ENCODE measurements at regions of chr6 and their contacts with region 1.

Region 1: DNA sequence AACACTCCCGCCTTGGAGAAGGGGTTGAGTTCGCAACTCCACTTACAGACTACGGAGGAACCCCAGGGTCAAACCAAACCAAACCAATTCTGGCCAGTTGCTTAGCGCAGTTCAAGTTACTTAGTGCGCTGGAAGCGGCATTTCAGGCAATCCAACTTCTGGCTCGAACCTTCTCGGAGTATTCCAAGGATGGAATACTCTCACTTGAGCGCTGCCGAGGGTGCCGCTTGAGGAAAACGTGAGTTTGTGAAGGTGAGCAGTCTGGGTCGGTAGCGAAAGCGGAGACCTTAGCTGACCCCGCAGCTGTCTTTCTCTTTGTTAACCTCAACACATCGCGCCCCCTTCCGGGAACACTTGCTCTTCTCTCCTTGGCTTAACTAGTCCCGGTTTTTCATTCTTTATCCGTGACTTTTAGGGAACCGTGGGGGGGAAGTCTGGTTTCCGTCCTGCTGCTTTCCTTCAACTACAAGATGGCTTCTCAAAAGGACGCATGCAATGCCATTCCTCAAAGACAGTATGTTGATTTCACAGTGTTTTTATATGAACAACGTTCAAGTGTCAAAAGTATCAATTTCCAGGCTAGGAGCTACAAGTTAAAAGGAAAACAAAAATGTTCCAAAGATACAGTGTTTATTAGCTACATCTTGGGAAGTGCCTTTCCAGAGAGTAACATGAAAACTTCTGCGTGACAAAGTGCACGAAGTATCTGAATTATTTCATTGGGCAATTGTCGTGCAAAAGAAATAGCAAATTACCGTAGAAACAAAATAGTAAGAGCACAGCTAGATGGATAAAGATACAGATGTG is 742 bp upstream of the PNISR start:
- DNase-seq: peak; percentile 76
- H3K4me3 Mint-ChIP-seq: peak overlapping the region; percentile 82
- H3K27ac Mint-ChIP-seq: peak overlapping the region; percentile 98
- H3K4me1 Mint-ChIP-seq: peaks cover 56% of the 10 kb centered on the region
- H3K27me3 Mint-ChIP-seq: no peaks in the 10 kb centered on the region

Region 2: GRCh38 chr6:98947351-98948292 is 478.2 kb before region 1 on chr6 and contains the start of gene FBXL4:
- CTCF ChIA-PET with region 1: no interaction called
- POLR2A ChIA-PET with region 1: no interaction called
- intact Hi-C with region 1: loop called (anchors 5 kb)
- DNase-seq: peak; percentile 88
- H3K4me3 Mint-ChIP-seq: peak within 1 kb of the TSS; percentile 93
- H3K27ac Mint-ChIP-seq: peak within 1 kb of the TSS; percentile 93
- H3K4me1 Mint-ChIP-seq: peaks cover 28% of the 10 kb centered on the region
- H3K27me3 Mint-ChIP-seq: no peaks in the 10 kb centered on the region
- total RNA-seq, gene FBXL4: 13.8 TPM

Region 3: DNA sequence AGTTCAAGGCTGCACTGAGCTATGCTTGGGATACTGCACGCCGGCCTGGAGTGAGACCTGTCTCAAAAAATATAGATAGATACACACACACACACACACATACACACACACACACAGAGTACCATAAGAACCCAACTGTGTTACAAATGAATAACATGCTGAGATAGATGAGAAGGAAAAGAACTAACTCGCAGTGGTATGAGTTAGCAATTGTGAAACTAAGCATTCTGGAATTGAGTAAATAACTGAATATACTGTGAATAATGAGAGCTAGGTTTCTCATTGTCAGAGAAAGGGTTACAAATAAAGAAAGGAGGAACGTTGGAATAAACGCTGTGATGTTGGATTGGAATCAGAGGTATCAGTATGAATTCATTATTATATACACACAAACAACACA is 61.8 kb before region 1 on chr6:
- CTCF ChIA-PET with region 1: interaction called, 3 read pairs
- POLR2A ChIA-PET with region 1: no interaction called
- intact Hi-C with region 1: loop called (anchors 1 kb)
- DNase-seq: peak; percentile 11
- H3K4me3 Mint-ChIP-seq: no peak overlapping the region
- H3K27ac Mint-ChIP-seq: no peak overlapping the region
- H3K4me1 Mint-ChIP-seq: peaks cover 16% of the 10 kb centered on the region
- H3K27me3 Mint-ChIP-seq: peaks cover 21% of the 10 kb centered on the region

Region 4: GRCh38 chr6:99393698-99394531 is 31.9 kb before region 1 on chr6 and contains the start of gene COQ3:
- CTCF ChIA-PET with region 1: interaction called, 8 read pairs
- POLR2A ChIA-PET with region 1: interaction called, 5 read pairs
- intact Hi-C with region 1: loop called (anchors 1 kb)
- DNase-seq: peak; percentile 75
- H3K4me3 Mint-ChIP-seq: peak within 1 kb of the TSS; percentile 94
- H3K27ac Mint-ChIP-seq: peak within 1 kb of the TSS; percentile 86
- H3K4me1 Mint-ChIP-seq: peaks cover 5% of the 10 kb centered on the region
- H3K27me3 Mint-ChIP-seq: no peaks in the 10 kb centered on the region
- total RNA-seq, gene COQ3: 14.9 to 16.4 TPM

Region 5: DNA sequence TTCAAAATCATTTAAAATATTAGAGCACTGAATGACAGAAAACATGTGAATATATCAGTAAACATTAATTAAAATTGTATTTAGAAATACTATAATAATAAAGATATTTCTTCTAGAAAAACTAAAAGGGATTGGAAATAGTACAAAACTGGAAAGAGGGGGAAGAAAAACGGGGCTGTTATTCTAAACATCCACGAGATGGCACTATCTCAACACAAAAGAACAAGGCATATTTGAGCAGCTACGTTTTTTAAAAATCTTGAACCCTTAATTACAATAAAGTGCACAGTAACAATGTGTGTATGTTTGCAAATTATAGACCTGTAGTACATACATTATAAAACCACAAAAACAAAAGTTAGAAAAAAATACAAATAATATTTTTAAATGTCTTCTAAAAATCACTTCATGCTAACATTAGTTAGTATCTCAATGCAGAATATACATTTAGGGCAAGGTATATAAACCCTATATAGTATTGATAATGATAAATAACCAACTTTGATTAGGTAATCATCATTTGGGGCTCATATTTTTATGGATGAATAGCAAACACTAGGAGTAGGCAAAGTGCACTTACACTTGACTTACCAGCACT is 41.8 kb after region 1 on chr6:
- CTCF ChIA-PET with region 1: no interaction called
- POLR2A ChIA-PET with region 1: no interaction called
- intact Hi-C with region 1: no loop called
- DNase-seq: no peak
- H3K4me3 Mint-ChIP-seq: no peak overlapping the region
- H3K27ac Mint-ChIP-seq: no peak overlapping the region
- H3K4me1 Mint-ChIP-seq: no peaks in the 10 kb centered on the region
- H3K27me3 Mint-ChIP-seq: no peaks in the 10 kb centered on the region

Region 6: GRCh38 chr6:99478483-99478882 is 52.6 kb after region 1 on chr6:
- CTCF ChIA-PET with region 1: no interaction called
- POLR2A ChIA-PET with region 1: no interaction called
- intact Hi-C with region 1: no loop called
- DNase-seq: no peak
- H3K4me3 Mint-ChIP-seq: no peak overlapping the region
- H3K27ac Mint-ChIP-seq: no peak overlapping the region
- H3K4me1 Mint-ChIP-seq: no peaks in the 10 kb centered on the region
- H3K27me3 Mint-ChIP-seq: no peaks in the 10 kb centered on the region

Region 7: DNA sequence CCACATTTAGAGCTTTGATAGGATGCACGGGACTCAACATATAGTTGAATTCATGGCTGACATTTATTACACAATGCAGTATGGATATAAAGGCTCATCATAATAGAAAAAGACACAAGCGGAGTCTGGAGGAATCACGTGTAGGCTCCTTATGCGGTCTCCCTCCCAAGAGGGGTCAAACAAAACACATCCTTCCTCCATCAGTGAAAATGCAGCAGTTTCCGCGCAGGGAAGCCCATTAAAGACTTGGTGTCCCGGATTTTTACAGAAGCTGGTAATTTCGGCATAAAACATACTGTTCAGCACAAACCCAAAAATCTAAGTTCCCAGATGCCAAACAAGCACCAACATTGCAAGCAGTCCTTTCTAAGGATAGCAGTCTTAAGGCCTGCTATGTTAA is 88.2 kb after region 1 on chr6:
- CTCF ChIA-PET with region 1: interaction called, 5 read pairs
- POLR2A ChIA-PET with region 1: interaction called, 5 read pairs
- intact Hi-C with region 1: loop called (anchors 1 kb)
- DNase-seq: no peak
- H3K4me3 Mint-ChIP-seq: peak overlapping the region; percentile 93
- H3K27ac Mint-ChIP-seq: peak overlapping the region; percentile 87
- H3K4me1 Mint-ChIP-seq: peaks cover 28% of the 10 kb centered on the region
- H3K27me3 Mint-ChIP-seq: peaks cover 1% of the 10 kb centered on the region

Region 8: GRCh38 chr6:99520855-99521632 is 95.2 kb after region 1 on chr6:
- CTCF ChIA-PET with region 1: interaction called, 5 read pairs
- POLR2A ChIA-PET with region 1: interaction called, 3 read pairs
- intact Hi-C with region 1: loop called (anchors 1 kb)
- DNase-seq: peak; percentile 84
- H3K4me3 Mint-ChIP-seq: peak overlapping the region; percentile 97
- H3K27ac Mint-ChIP-seq: peak overlapping the region; percentile 92
- H3K4me1 Mint-ChIP-seq: peaks cover 15% of the 10 kb centered on the region
- H3K27me3 Mint-ChIP-seq: peaks cover 1% of the 10 kb centered on the region

Region 9: GRCh38 chr6:99568103-99568933 is 142.5 kb after region 1 on chr6 and contains the start of gene CCNC:
- CTCF ChIA-PET with region 1: no interaction called
- POLR2A ChIA-PET with region 1: no interaction called
- intact Hi-C with region 1: loop called (anchors 1 kb)
- DNase-seq: peak; percentile 94
- H3K4me3 Mint-ChIP-seq: peak within 1 kb of the TSS; percentile 97
- H3K27ac Mint-ChIP-seq: peak within 1 kb of the TSS; percentile 94
- H3K4me1 Mint-ChIP-seq: peaks cover 25% of the 10 kb centered on the region
- H3K27me3 Mint-ChIP-seq: no peaks in the 10 kb centered on the region
- total RNA-seq, gene CCNC: 59.9 to 64.0 TPM